Activated CD4-positive, alpha-beta T cell treated with anti-CD3 and anti-CD28 coated beads, Interleukin-2, amount 10 ng/mL, durations not matched to agents 24 days and 14 days (primary cell): ENCODE measurements at regions of chr12 and their contacts with region 1.

Region 1: DNA sequence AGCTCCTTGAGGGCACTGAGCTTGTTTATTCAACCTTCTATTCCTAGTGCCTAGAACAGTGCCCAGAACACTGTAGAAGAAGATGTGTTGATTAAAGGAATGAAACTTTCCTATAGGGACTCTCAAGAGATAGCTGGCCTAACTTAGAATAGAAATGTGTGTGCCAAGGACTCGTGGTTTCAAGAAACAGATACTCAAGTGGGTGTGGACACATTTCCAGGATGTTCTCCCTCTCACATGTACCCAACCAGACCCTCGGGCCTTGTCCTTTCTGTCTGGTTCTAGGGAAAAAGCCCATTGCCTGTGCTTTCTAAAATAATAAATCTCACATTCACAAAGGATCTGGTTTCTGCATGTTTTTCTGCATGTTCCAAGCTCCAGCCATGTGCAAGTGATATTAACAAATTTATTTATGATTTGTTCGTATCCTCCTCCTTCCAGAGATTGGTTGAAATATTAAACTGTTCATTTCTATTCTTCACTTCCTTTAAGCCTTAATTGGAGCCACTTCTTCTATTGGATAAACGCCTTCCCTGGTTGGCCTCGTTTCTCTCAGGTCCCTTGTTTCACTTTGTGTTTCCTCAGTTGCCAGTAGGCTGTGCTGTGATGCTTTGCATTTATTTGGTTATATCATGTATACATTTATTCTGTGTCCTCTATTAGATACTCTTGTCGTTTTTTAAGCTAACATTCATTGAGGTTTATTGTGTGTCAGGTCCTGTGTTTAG is 89.8 kb downstream of the CRADD start:
- DNase-seq: peak; percentile 85
- H3K4me3 Mint-ChIP-seq: peak overlapping the region; percentile 31
- H3K27ac Mint-ChIP-seq: no peak overlapping the region
- H3K4me1 Mint-ChIP-seq: peaks cover 40% of the 10 kb centered on the region
- H3K27me3 Mint-ChIP-seq: no peaks in the 10 kb centered on the region

Region 2: GRCh38 chr12:93336291-93336741 is 430.6 kb before region 1 on chr12:
- intact Hi-C with region 1: no loop called
- DNase-seq: no peak
- H3K4me3 Mint-ChIP-seq: no peak overlapping the region
- H3K27ac Mint-ChIP-seq: no peak overlapping the region
- H3K4me1 Mint-ChIP-seq: no peaks in the 10 kb centered on the region
- H3K27me3 Mint-ChIP-seq: peaks cover 3% of the 10 kb centered on the region

Region 3: DNA sequence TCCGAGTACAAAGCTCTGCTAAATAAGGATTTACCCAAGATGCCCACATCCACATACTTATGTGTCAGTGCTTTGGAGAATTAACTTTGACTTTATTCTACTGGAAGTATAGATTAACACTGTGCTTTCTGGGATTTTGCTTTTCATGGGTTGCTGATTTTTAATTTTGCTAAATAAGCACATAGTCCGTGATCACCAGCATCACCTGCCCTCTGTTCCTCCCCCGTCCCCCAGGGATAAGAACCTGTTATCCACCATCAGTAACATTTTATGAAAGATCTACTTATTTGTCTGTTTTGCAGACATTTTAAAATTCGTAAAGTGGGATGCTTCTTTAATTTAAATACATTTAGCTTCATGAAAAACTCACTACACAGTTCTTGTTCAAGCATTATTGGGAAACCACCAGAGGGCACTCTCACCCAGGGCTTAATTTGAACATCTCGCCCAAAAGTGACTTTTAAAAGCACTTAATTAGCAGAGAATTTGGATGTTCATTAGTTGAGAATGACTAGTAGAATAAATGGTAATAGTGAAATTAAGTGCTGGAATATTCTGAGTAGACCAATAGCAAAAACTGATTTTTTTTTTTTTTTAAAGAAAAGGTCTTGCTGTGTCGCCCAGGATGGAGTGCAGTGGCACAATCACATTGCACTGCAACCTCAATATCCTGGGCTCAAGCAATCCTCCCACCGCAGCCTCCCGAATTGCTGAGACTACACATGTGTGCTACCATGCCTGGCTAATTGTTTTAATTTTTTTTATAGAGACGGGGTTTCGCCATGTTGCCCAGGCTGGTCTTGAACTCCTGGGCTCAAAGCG is 263.9 kb before region 1 on chr12:
- intact Hi-C with region 1: loop called (anchors 2 kb)
- DNase-seq: peak; percentile 90
- H3K4me3 Mint-ChIP-seq: no peak overlapping the region
- H3K27ac Mint-ChIP-seq: no peak overlapping the region
- H3K4me1 Mint-ChIP-seq: peaks cover 18% of the 10 kb centered on the region
- H3K27me3 Mint-ChIP-seq: no peaks in the 10 kb centered on the region

Region 4: GRCh38 chr12:93857279-93857938 is 90.4 kb after region 1 on chr12:
- intact Hi-C with region 1: no loop called
- DNase-seq: peak; percentile 46
- H3K4me3 Mint-ChIP-seq: no peak overlapping the region
- H3K27ac Mint-ChIP-seq: no peak overlapping the region
- H3K4me1 Mint-ChIP-seq: peaks cover 25% of the 10 kb centered on the region
- H3K27me3 Mint-ChIP-seq: no peaks in the 10 kb centered on the region